ENCODE measurements at regions of chr2 and their contacts with region 1.

Region 1: DNA sequence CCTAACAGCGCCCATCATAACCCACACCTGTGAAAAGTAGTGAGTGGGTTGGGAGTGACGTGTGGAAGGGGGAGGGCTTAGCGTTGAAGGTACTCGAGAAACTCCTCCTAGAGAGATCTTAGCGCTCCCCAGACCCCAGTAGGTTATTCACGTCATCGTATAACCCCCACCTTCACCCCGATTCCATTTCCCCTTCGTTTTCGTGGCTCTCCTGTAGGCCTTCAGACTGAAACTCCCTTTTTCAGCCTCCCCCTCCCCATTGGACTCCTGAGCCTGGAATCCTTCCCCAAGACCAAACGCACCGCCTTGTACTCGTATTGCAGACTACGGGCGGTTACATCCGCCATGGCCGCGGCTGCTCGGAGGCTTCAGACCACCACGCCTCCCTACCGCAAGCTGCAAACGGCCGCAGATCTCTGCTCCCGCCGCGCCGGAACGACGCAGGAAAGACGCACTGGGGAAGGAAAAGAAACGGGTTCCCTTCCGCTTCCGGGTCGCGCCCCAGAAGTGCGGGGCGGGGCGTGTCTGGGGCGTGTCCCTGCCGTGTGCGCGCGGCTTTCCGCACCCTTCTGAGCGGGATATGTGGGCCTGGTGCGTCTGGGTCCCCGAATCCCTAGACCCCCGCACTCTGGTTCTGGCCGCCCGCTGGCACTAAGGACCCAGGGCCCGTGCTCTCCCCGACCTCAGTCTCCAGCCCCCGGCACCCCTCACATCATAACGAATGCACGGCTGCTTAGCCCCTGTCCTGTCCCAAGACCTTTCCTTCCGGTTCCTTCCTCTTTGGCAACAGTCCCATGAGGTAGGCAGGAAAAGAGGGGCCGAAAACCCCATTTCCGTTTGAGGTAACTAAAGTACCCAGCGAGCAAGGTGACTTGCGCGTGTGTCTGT is at the start of gene SNRNP200:
- DNase-seq: peak; percentile 88
- H3K4me3 Mint-ChIP-seq: peak within 1 kb of the TSS; percentile 95
- H3K27ac Mint-ChIP-seq: peak within 1 kb of the TSS; percentile 96
- H3K4me1 Mint-ChIP-seq: peaks cover 25% of the 10 kb centered on the region
- H3K27me3 Mint-ChIP-seq: no peaks in the 10 kb centered on the region
- CTCF ChIP-seq: no peak
- total RNA-seq, gene SNRNP200: 115 and 116 TPM in 2 replicates

Region 2: DNA sequence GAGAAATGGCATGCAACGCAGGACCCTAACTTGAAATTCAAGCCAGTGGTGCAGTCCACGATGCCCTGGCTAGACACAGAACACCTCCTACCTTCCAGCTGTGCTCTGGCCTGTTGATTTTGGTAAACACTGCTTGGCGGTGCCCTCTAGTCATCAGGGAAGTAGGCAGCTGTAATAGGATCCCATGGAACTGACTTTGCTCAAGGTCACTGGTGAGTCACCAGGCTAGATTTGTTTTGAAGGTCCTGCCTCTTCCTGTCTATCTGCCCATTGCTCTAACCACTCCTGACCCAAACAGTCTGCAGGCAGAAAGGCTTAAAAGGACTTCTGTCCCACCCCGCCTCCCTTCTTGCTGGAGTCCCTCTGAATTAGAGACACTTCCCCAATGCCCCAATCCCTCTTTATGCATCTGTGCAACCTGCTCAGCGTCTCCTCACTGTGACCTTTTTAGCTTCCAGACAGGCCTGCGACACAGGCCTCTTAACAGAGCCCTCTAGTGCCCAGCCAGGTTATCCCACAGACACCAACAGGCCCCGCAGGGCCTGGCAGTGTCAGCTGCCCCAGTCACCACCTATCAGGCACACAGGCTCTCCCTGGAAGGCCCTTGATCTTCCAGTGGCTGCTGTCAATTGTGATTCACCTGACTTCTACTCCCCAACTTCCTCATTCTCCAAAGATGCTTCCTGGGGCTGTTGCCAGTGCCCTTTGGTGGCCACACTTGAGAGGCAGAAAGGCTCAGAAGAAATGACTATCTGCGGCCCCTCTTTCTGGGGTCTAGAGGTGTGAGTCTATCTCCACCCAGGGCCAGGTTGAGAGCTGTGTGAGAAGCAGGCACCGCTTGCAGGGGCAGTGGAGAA is 44.7 kb before region 1 on chr2:
- CTCF ChIA-PET with region 1: interaction called, 3 read pairs
- POLR2A ChIA-PET with region 1: interaction called, 14 read pairs
- intact Hi-C with region 1: no loop called
- DNase-seq: peak; percentile 94
- H3K4me3 Mint-ChIP-seq: peak overlapping the region; percentile 42
- H3K27ac Mint-ChIP-seq: peak overlapping the region; percentile 83
- H3K4me1 Mint-ChIP-seq: peaks cover 34% of the 10 kb centered on the region
- H3K27me3 Mint-ChIP-seq: no peaks in the 10 kb centered on the region
- CTCF ChIP-seq: peak; percentile 45

Region 3: DNA sequence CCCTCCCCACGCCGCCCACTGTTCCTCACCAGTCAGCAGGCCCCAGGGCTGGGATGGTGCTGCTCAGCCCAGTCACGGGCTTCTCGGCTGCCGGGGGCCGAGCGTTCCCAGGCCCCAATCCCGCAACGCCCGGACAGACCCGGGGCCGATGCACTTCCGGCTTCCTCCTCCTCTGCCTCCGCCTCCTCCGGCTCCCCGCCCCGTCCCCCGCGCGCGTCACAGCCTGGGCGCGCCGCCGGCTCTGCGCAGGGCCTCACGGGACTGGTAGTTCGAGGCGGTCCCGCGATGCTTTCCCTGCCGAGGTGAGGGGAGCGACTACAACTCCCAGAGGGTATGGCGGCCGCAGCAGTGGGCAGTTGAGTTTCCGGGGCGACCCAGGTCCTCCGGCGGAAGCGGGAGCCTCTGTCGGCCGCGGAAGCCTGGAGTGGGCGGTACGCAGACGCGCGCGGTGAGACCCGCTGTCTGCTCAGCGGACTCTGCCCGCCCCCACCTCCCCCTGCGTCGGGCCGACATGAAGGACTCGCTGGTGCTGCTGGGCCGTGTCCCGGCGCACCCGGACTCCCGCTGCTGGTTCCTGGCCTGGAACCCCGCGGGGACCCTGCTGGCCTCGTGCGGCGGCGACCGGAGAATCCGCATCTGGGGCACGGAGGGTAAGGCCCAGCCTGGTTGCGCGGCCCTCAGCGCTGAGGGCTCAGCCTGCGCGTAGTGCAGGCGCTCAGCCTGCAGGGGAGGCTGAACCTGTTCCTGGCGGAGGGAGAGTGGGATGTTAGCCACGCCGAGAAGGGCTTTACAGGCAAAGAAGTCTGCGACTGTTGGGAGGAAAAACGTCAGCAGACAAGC is 39.3 kb before region 1 on chr2 and contains the starts of genes CIAO1 and TMEM127:
- CTCF ChIA-PET with region 1: interaction called, 4 read pairs
- POLR2A ChIA-PET with region 1: interaction called, 14 read pairs
- intact Hi-C with region 1: no loop called
- DNase-seq: peak; percentile 98
- H3K4me3 Mint-ChIP-seq: peak within 1 kb of the TSS; percentile 93
- H3K27ac Mint-ChIP-seq: peak within 1 kb of the TSS; percentile 68
- H3K4me1 Mint-ChIP-seq: peaks cover 25% of the 10 kb centered on the region
- H3K27me3 Mint-ChIP-seq: no peaks in the 10 kb centered on the region
- CTCF ChIP-seq: no peak
- total RNA-seq, gene CIAO1: 62.3 and 63.3 TPM in 2 replicates
- total RNA-seq, gene TMEM127: 31.5 and 40.0 TPM in 2 replicates

Region 4: GRCh38 chr2:96320728-96321622 is 15.6 kb after region 1 on chr2:
- CTCF ChIA-PET with region 1: interaction called, 3 read pairs
- POLR2A ChIA-PET with region 1: interaction called, 20 read pairs
- intact Hi-C with region 1: no loop called
- DNase-seq: no peak
- H3K4me3 Mint-ChIP-seq: peak overlapping the region; percentile 70
- H3K27ac Mint-ChIP-seq: no peak overlapping the region
- H3K4me1 Mint-ChIP-seq: peaks cover 10% of the 10 kb centered on the region
- H3K27me3 Mint-ChIP-seq: peaks cover 70% of the 10 kb centered on the region
- CTCF ChIP-seq: no peak

Region 5: DNA sequence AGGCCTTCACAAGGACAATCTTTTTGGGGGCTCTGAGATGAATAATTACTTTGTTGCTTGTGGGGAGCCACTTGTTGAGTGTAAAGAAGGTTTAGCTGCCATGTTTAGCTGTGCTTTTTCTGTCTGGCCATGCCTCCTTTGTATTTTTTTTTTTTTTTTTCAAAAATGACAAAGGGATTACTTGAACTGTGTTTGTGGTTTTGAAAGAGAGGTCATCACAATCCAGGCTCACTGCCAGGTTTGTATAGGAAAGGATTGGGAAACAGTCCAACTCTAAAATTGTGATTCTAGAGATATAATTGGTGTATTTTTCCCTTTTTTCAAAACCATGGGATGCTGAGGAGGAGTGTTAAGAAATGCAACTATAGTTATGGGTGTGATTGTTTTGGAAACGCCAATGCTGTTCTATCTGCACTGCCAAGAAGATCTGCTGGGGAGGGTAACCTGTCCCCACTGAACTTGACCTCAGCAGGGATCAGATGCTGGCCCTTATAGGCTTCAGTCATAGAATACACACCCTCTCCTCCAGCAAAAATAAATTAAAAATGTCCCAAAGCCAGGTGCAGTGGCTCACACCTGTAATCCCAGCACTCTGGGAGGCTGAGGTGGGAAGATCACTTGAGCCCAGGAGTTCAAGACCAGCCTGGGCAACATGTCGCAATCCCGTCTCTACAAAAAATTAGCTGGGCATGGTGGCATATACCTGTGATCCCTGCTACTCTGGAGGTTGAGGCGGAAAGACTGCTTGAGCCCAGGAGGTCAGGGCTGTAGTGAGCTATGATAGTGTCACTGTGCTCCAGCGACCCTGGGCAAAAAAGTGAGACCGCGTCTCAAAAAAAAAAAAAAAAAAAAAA is 24.3 kb after region 1 on chr2:
- CTCF ChIA-PET with region 1: interaction called, 3 read pairs
- POLR2A ChIA-PET with region 1: interaction called, 78 read pairs
- intact Hi-C with region 1: loop called (anchors 2 kb)
- DNase-seq: peak; percentile 98
- H3K4me3 Mint-ChIP-seq: no peak overlapping the region
- H3K27ac Mint-ChIP-seq: peak overlapping the region; percentile 75
- H3K4me1 Mint-ChIP-seq: peaks cover 30% of the 10 kb centered on the region
- H3K27me3 Mint-ChIP-seq: peaks cover 37% of the 10 kb centered on the region
- CTCF ChIP-seq: no peak

Region 6: GRCh38 chr2:96336104-96336775 is 30.9 kb after region 1 on chr2:
- CTCF ChIA-PET with region 1: interaction called, 3 read pairs
- POLR2A ChIA-PET with region 1: interaction called, 78 read pairs
- intact Hi-C with region 1: loop called (anchors 2 kb)
- DNase-seq: no peak
- H3K4me3 Mint-ChIP-seq: peak overlapping the region; percentile 68
- H3K27ac Mint-ChIP-seq: peak overlapping the region; percentile 39
- H3K4me1 Mint-ChIP-seq: peaks cover 42% of the 10 kb centered on the region
- H3K27me3 Mint-ChIP-seq: no peaks in the 10 kb centered on the region
- CTCF ChIP-seq: no peak